ENCODE measurements at regions of chr22 and their contacts with region 1.

Region 1: GRCh38 chr22:19717691-19718455 is 3.6 kb downstream of the SEPTIN5 start:
- DNase-seq: no peak
- H3K4me3 ChIP-seq: peak overlapping the region; percentile 56 to 71
- H3K27ac ChIP-seq: peak overlapping the region; percentile 85
- H3K4me1 ChIP-seq: peaks cover 61% of the 10 kb centered on the region
- H3K27me3 ChIP-seq: no peaks in the 10 kb centered on the region
- CTCF ChIP-seq: peak; percentile 95 to 98 (median 96)
- POLR2A ChIP-seq: peak in 1 of 2 donors; percentile 3

Region 2: DNA sequence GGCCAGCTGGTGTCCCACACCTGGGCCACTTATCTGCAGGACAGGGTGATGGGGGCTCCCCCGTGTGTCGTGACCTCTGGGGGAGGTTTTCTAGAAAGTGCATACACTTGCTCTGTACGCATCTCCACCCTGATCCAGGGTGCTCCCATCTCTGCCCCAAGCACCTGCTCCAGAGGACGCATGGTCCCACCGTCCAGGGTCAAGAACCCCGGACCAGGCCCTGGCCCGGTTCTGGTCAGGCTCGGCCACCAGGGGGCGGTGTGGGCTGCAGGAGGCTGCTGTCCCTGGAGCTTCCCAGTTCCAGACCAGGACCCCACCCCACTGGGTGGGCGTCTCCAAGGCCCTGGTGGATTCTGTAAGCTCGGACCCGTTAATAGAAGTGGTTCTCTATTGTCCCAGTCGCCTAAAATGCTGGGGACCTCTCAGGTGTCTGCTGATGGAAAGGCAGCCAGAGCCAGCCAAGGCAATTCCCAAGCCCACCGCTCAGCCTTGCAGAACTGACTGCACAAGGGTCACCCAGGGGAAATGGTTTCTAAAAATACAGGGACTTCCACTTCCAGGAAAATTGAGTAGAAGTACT is 38.3 kb before region 1 on chr22:
- intact Hi-C with region 1: loop called (anchors 5 kb)
- DNase-seq: no peak
- H3K4me3 ChIP-seq: no peak overlapping the region
- H3K27ac ChIP-seq: peak overlapping the region; percentile 16
- H3K4me1 ChIP-seq: no peaks in the 10 kb centered on the region
- H3K27me3 ChIP-seq: no peaks in the 10 kb centered on the region
- CTCF ChIP-seq: peak; percentile 72 to 93 (median 86)
- POLR2A ChIP-seq: no peak

Region 3: GRCh38 chr22:19986410-19987341 is 268.8 kb after region 1 on chr22:
- intact Hi-C with region 1: no loop called
- DNase-seq: no peak
- H3K4me3 ChIP-seq: peak overlapping the region; percentile 57
- H3K27ac ChIP-seq: peak overlapping the region; percentile 62
- H3K4me1 ChIP-seq: peaks cover 32% of the 10 kb centered on the region
- H3K27me3 ChIP-seq: no peaks in the 10 kb centered on the region
- CTCF ChIP-seq: no peak
- POLR2A ChIP-seq: peak in 1 of 2 donors; percentile 40